Calu3 (cell line): ENCODE measurements at regions of chr19 and their contacts with region 1.

Region 1: DNA sequence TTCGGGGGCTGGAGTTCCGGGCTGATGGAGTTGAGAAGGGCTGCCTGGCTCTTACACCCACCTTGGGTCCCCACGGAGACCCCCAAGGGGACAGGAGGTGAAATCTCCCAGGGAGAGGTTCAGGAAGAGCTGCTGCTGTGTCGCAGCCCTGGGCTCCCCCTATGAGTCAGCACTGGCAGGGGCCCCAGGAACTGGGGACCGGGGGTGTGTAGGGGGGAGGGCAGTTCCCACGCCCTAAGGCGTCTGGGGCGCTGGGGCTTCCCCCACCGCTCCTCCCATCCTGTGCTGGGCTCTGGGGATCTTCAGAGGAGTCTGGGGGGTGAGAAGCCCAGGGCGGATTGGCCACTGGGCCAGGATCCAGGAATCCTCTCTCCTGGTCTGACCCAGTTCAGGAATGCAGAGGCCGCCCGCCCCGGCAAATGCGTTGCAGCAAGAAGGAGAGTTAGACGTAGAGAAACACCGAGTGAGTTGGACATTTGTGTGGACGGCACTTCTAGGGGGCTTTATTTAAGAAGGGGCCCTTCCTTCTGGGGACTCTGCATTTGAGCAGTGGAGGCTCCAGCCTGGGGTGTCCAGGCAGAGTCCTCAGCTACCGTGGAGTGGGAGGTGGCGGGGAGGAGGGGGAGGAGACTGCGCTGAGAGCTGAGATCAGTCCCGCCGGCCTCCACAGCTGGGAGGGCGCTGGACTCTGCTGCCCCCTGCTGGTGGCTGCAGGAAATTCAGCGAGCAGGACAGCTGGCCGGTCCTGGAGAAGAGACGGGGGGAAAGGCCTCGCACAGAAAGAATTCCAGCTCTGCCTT is 15.0 kb upstream of the NANOS3 start:
- DNase-seq: peak; percentile 91
- H3K4me3 Mint-ChIP-seq: peak overlapping the region; percentile 80
- H3K27ac Mint-ChIP-seq: peak overlapping the region; percentile 81
- H3K4me1 Mint-ChIP-seq: peaks cover 51% of the 10 kb centered on the region
- H3K27me3 Mint-ChIP-seq: no peaks in the 10 kb centered on the region
- CTCF ChIP-seq: peak; percentile 88

Region 2: GRCh38 chr19:13784731-13785452 is 77.0 kb before region 1 on chr19:
- CTCF ChIA-PET with region 1: interaction called, 6 read pairs
- intact Hi-C with region 1: loop called (anchors 1 kb)
- DNase-seq: peak; percentile 76
- H3K4me3 Mint-ChIP-seq: peak overlapping the region; percentile 34
- H3K27ac Mint-ChIP-seq: peak overlapping the region; percentile 77
- H3K4me1 Mint-ChIP-seq: peaks cover 16% of the 10 kb centered on the region
- H3K27me3 Mint-ChIP-seq: no peaks in the 10 kb centered on the region
- CTCF ChIP-seq: peak; percentile 53

Region 3: GRCh38 chr19:13839130-13839937 is 22.6 kb before region 1 on chr19:
- CTCF ChIA-PET with region 1: interaction called, 16 read pairs
- intact Hi-C with region 1: no loop called
- DNase-seq: peak; percentile 81
- H3K4me3 Mint-ChIP-seq: peak overlapping the region; percentile 86
- H3K27ac Mint-ChIP-seq: peak overlapping the region; percentile 96
- H3K4me1 Mint-ChIP-seq: peaks cover 5% of the 10 kb centered on the region
- H3K27me3 Mint-ChIP-seq: no peaks in the 10 kb centered on the region
- CTCF ChIP-seq: no peak

Region 4: GRCh38 chr19:14097532-14098151 is 235.7 kb after region 1 on chr19:
- CTCF ChIA-PET with region 1: no interaction called
- intact Hi-C with region 1: no loop called
- DNase-seq: no peak
- H3K4me3 Mint-ChIP-seq: no peak overlapping the region
- H3K27ac Mint-ChIP-seq: no peak overlapping the region
- H3K4me1 Mint-ChIP-seq: no peaks in the 10 kb centered on the region
- H3K27me3 Mint-ChIP-seq: no peaks in the 10 kb centered on the region
- CTCF ChIP-seq: no peak